Caco-2 (cell line): ENCODE measurements at regions of chr16 and their contacts with region 1.

Region 1: GRCh38 chr16:67632415-67633172 is 12.3 kb upstream of the CARMIL2 start:
- DNase-seq: no peak
- H3K4me3 ChIP-seq: no peak overlapping the region
- H3K4me3 Mint-ChIP-seq: no peak overlapping the region
- H3K27ac Mint-ChIP-seq: no peak overlapping the region
- H3K4me1 ChIP-seq: no peaks in the 10 kb centered on the region
- H3K4me1 Mint-ChIP-seq: no peaks in the 10 kb centered on the region
- H3K27me3 ChIP-seq: no peaks in the 10 kb centered on the region
- H3K27me3 Mint-ChIP-seq: no peaks in the 10 kb centered on the region
- CTCF ChIP-seq: no peak

Region 2: GRCh38 chr16:67428146-67428731 is 204.4 kb before region 1 on chr16:
- CTCF ChIA-PET with region 1: no interaction called
- POLR2A ChIA-PET with region 1: no interaction called
- intact Hi-C with region 1: no loop called
- DNase-seq: peak; percentile 80 to 83
- H3K4me3 ChIP-seq: no peak overlapping the region
- H3K4me3 Mint-ChIP-seq: no peak overlapping the region
- H3K27ac Mint-ChIP-seq: no peak overlapping the region
- H3K4me1 ChIP-seq: peaks cover 32% of the 10 kb centered on the region
- H3K4me1 Mint-ChIP-seq: peaks cover 14% of the 10 kb centered on the region
- H3K27me3 ChIP-seq: no peaks in the 10 kb centered on the region
- H3K27me3 Mint-ChIP-seq: no peaks in the 10 kb centered on the region
- CTCF ChIP-seq: peak; percentile 89 to 97

Region 3: GRCh38 chr16:67613808-67614207 is 18.8 kb before region 1 on chr16:
- CTCF ChIA-PET with region 1: no interaction called
- POLR2A ChIA-PET with region 1: no interaction called
- intact Hi-C with region 1: loop called (anchors 1 kb)
- DNase-seq: peak in 1 of 2 experiments; percentile 44
- H3K4me3 ChIP-seq: no peak overlapping the region
- H3K4me3 Mint-ChIP-seq: no peak overlapping the region
- H3K27ac Mint-ChIP-seq: no peak overlapping the region
- H3K4me1 ChIP-seq: no peaks in the 10 kb centered on the region
- H3K4me1 Mint-ChIP-seq: no peaks in the 10 kb centered on the region
- H3K27me3 ChIP-seq: no peaks in the 10 kb centered on the region
- H3K27me3 Mint-ChIP-seq: no peaks in the 10 kb centered on the region
- CTCF ChIP-seq: peak in 1 of 2 experiments; percentile 28